ENCODE measurements at regions of chr6 and their contacts with region 1.

Region 1: GRCh38 chr6:34986845-34987246 is 97.8 kb downstream of the ANKS1A start:
- DNase-seq: peak in 4 of 5 donors; percentile 58 to 78 (median 68)
- ATAC-seq: peak; percentile 56 to 86 (median 83)
- H3K4me3 ChIP-seq: no peak overlapping the region
- H3K27ac ChIP-seq: peak overlapping the region in 2 of 12 donors; percentile 15 to 61
- H3K4me1 ChIP-seq: peaks cover 0 to 12% (median 7%) of the 10 kb centered on the region in 12 donors
- H3K27me3 ChIP-seq: no peaks in the 10 kb centered on the region
- CTCF ChIP-seq: peak; percentile 77 to 96 (median 88)
- POLR2A ChIP-seq: no peak

Region 2: DNA sequence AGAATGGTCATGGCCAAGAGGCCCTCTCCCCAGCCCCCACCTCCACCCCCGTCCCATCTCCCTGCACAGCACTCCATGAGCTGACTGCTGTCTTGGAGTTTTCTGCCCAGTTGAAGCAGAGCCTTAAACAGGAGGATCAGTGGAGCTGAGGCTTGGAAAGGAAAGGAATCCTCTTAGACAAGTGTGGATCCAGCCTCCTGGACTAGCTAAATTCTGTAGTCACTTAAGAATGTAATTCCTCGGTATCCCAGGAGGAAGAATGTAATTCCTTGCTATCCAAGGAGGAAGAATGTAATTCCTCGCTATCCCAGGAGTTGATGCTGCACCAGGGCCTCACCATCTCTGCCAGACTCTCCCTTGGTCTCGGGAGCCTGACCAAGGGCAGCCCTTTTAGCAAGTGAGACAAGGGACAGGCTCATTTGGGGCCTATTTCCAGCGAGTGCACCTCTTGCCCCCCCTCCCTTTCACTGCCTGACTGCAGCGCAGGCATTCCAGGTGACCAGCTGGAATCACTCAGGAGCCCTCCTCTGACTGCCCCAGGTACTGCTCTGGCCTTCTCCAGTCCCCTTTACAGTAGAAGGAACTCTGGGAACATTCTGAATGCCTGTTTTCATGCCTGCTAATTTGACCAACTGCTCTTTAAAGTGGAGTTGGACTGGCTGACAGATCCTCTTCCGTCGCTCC is 78.1 kb after region 1 on chr6:
- intact Hi-C with region 1: loop called in 2 of 10 experiments (anchors 5 kb)
- DNase-seq: no peak
- ATAC-seq: peak in 3 of 4 donors; percentile 6 to 23 (median 6)
- H3K4me3 ChIP-seq: no peak overlapping the region
- H3K27ac ChIP-seq: peak overlapping the region in 11 of 12 donors; percentile 38 to 84 (median 76)
- H3K4me1 ChIP-seq: peaks cover 0 to 55% (median 24%) of the 10 kb centered on the region in 12 donors
- H3K27me3 ChIP-seq: no peaks in the 10 kb centered on the region
- CTCF ChIP-seq: peak in 1 of 12 donors; percentile 11
- POLR2A ChIP-seq: no peak

Region 3: GRCh38 chr6:35209081-35209480 is 222.2 kb after region 1 on chr6:
- intact Hi-C with region 1: loop called in 7 of 10 experiments (anchors 2 to 10 kb)
- DNase-seq: no peak
- ATAC-seq: no peak
- H3K4me3 ChIP-seq: no peak overlapping the region
- H3K27ac ChIP-seq: no peak overlapping the region
- H3K4me1 ChIP-seq: peaks cover 0 to 15% (median 4%) of the 10 kb centered on the region in 12 donors
- H3K27me3 ChIP-seq: peaks cover 0 to 31% (median 7%) of the 10 kb centered on the region in 9 donors
- CTCF ChIP-seq: no peak
- POLR2A ChIP-seq: no peak